HEK293 (cell line): ENCODE measurements at regions of chr18 and their contacts with region 1.

Region 1: GRCh38 chr18:3593904-3594661 is 144.1 kb downstream of the TGIF1 start:
- H3K4me3 ChIP-seq: peak overlapping the region; percentile 39
- H3K27ac ChIP-seq: peak overlapping the region; percentile 97
- H3K4me1 ChIP-seq: peaks cover 23% of the 10 kb centered on the region
- CTCF ChIP-seq: peak; percentile 58

Region 2: GRCh38 chr18:3281456-3282400 is 312.4 kb before region 1 on chr18:
- CTCF ChIA-PET with region 1: interaction called, 15 read pairs
- POLR2A ChIA-PET with region 1: interaction called, 3 read pairs
- H3K4me3 ChIP-seq: no peak overlapping the region
- H3K27ac ChIP-seq: no peak overlapping the region
- H3K4me1 ChIP-seq: no peaks in the 10 kb centered on the region
- CTCF ChIP-seq: peak; percentile 36; the same call in 1 of the 2 replicates

Region 3: GRCh38 chr18:3604498-3605408 is 10.7 kb after region 1 on chr18:
- CTCF ChIA-PET with region 1: interaction called, 17 read pairs
- POLR2A ChIA-PET with region 1: interaction called, 39 read pairs
- H3K4me3 ChIP-seq: peak overlapping the region; percentile 21
- H3K27ac ChIP-seq: peak overlapping the region; percentile 86
- H3K4me1 ChIP-seq: peaks cover 16% of the 10 kb centered on the region
- CTCF ChIP-seq: no peak

Region 4: GRCh38 chr18:3623769-3624545 is 29.9 kb after region 1 on chr18:
- CTCF ChIA-PET with region 1: interaction called, 5 read pairs
- POLR2A ChIA-PET with region 1: interaction called, 20 read pairs
- H3K4me3 ChIP-seq: no peak overlapping the region; the same call in 1 of the 2 replicates
- H3K27ac ChIP-seq: peak overlapping the region; percentile 41; the same call in 1 of the 2 replicates
- H3K4me1 ChIP-seq: peaks cover 16% of the 10 kb centered on the region
- CTCF ChIP-seq: no peak